ENCODE measurements at regions of chr15 and their contacts with region 1.

Region 1: GRCh38 chr15:57561041-57561711 is 30.5 kb upstream of the MYZAP start:
- DNase-seq: peak; percentile 68
- CTCF ChIP-seq: peak; percentile 90

Region 2: DNA sequence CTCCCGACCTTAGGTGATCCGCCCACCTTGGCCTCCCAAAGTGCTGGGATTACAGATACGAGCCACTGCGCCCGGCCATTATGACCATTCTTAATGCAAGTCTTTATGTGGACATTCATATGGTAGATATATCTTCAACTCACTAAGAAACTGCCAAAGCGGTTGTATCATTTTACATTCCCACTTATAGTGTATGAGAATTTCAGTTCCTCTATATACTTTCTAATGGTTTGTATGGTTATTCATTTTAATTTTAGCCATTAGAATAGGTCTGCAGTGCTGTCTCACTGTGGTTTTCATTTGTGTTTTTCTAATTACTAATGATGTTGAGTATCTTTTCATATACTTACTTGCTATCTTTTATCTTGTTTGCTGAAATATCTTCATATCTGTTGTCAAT is 610.2 kb before region 1 on chr15:
- in situ Hi-C with region 1: no loop called
- DNase-seq: no peak
- CTCF ChIP-seq: no peak

Region 3: DNA sequence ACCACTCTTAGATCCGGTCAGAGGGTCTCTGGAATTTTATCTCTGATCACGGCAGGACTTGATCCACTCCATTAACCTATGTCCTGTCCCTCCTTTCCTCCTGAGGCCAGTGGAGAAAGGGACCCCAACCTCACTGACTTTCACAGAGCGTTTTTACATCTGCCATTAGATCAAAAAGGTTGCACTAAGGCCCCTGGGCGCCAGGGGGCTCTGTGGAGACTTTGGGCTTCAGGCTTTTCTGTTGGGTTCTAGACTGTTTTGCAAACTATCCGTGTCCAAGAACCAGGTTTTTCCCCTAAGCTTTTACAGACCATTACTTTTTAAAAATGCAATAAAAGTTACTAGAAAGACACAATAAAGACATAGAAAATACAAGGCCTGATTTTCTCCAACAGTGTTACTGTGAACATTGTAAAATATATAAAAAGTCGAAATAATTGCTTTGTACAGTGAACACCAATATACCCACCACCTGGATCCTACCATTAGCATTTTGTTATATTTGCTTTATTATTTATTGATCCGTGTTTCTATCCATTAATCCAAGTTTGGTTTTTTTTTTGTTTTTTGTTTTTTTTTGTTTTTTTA is 305.1 kb after region 1 on chr15:
- in situ Hi-C with region 1: loop called (anchors 25 kb)
- DNase-seq: peak; percentile 39
- CTCF ChIP-seq: peak; percentile 58